Caco-2 (cell line): ENCODE measurements at regions of chr11 and their contacts with region 1.

Region 1: GRCh38 chr11:99522467-99523173 is 501.9 kb downstream of the CNTN5 start:
- DNase-seq: no peak
- H3K4me3 ChIP-seq: no peak overlapping the region
- H3K4me3 Mint-ChIP-seq: no peak overlapping the region
- H3K27ac Mint-ChIP-seq: no peak overlapping the region
- H3K4me1 ChIP-seq: no peaks in the 10 kb centered on the region
- H3K4me1 Mint-ChIP-seq: peaks cover 6% of the 10 kb centered on the region
- H3K27me3 ChIP-seq: no peaks in the 10 kb centered on the region
- H3K27me3 Mint-ChIP-seq: peaks cover 13% of the 10 kb centered on the region
- CTCF ChIP-seq: no peak

Region 2: GRCh38 chr11:99079576-99079975 is 443.0 kb before region 1 on chr11:
- CTCF ChIA-PET with region 1: no interaction called
- POLR2A ChIA-PET with region 1: no interaction called
- intact Hi-C with region 1: no loop called
- DNase-seq: no peak
- H3K4me3 ChIP-seq: no peak overlapping the region
- H3K4me3 Mint-ChIP-seq: no peak overlapping the region
- H3K27ac Mint-ChIP-seq: no peak overlapping the region
- H3K4me1 ChIP-seq: no peaks in the 10 kb centered on the region
- H3K4me1 Mint-ChIP-seq: no peaks in the 10 kb centered on the region
- H3K27me3 ChIP-seq: peaks cover 1% of the 10 kb centered on the region; the same call in 1 of the 2 replicates
- H3K27me3 Mint-ChIP-seq: peaks cover 3% of the 10 kb centered on the region
- CTCF ChIP-seq: no peak

Region 3: DNA sequence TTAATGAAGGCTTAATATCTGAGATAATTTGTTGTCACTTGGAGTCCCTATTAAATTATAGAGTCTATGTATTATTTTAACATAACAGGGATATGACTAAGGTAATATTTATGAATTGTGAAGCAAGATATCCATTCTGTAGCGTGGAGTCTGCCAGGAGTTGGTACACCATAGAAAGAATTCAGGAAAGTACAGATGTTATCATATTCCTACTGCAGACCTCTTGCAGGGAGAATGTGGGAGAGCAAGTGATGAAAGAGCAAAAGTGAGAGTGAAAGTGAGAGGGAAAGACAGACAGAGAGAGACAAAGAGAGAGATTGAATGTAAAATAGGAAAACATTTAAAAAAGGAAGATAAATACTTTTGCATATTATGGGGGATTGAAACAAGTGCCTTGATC is 33.1 kb before region 1 on chr11:
- CTCF ChIA-PET with region 1: no interaction called
- POLR2A ChIA-PET with region 1: no interaction called
- intact Hi-C with region 1: loop called (anchors 2 kb)
- DNase-seq: no peak
- H3K4me3 ChIP-seq: no peak overlapping the region
- H3K4me3 Mint-ChIP-seq: no peak overlapping the region
- H3K27ac Mint-ChIP-seq: no peak overlapping the region
- H3K4me1 ChIP-seq: no peaks in the 10 kb centered on the region
- H3K4me1 Mint-ChIP-seq: no peaks in the 10 kb centered on the region
- H3K27me3 ChIP-seq: no peaks in the 10 kb centered on the region
- H3K27me3 Mint-ChIP-seq: peaks cover 3% of the 10 kb centered on the region
- CTCF ChIP-seq: no peak